ENCODE measurements at regions of chr20 and their contacts with region 1.

Region 1: DNA sequence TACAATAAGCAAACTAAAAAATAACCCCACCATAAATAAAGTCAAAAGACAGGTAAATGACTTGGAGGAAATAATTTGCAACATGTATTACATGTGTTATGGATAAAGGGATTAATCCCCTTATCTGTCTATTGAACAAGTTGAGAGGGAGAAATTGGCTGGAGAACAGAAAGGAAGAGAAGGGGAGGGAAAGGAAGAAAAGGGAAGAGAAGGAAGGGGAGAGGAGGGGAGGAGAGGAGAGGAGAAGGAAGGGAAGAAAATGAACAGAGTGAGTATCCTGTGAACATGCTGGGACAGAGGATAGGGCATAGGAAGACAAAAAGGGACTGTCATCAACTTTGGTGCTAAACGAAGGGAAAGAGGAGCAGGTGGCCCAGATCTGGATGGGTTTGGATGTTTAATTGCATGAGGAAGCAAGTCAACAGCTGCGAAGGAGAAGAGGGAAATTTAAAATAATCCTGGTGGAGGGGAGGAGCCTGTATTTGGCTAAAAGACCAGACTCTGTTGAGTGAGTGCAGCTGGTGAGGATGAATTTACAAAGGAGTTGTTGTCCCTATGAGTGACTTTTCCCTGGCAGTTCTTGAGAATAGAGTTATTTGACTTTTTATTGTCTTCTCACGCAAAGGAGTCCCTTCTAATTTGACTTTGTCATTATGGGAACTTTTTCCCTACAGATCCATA is 14.2 kb upstream of the SHLD1 start:
- DNase-seq: no peak
- H3K4me3 ChIP-seq: no peak overlapping the region
- H3K27ac ChIP-seq: no peak overlapping the region
- H3K4me1 ChIP-seq: peaks cover 0 to 10% of the 10 kb centered on the region in 2 donors
- H3K27me3 ChIP-seq: no peaks in the 10 kb centered on the region
- CTCF ChIP-seq: no peak
- POLR2A ChIP-seq: no peak

Region 2: DNA sequence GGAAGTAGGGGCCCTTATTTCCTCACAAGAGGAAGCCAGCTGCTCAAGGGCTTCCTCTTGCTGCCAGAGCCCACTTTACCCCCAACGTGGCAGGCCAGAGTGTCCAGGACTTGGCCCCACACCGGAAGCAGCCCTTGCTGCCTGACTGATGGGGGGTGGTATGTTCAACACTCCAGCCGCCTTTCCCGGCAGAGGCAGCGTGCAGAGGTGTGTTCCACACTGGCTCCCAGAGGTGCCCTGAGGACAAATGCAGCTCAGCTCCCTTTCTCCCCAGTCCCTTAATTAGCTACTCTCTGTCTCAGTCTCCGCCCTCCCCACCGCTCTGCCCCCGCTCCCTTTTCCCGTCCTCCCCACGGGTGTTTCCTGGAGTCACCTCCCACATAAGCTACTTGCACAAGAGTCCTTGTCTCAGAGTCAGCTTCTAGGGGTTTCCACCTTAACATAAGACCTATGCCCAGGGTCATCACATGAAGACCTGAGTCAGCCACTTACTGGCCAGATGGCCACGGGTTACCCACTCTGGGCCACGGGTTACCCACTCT is 47.5 kb before region 1 on chr20:
- intact Hi-C with region 1: loop called (anchors 10 kb)
- DNase-seq: no peak
- H3K4me3 ChIP-seq: no peak overlapping the region
- H3K27ac ChIP-seq: no peak overlapping the region
- H3K4me1 ChIP-seq: no peaks in the 10 kb centered on the region
- H3K27me3 ChIP-seq: no peaks in the 10 kb centered on the region
- CTCF ChIP-seq: no peak
- POLR2A ChIP-seq: no peak